Body of pancreas (tissue), 4 donors: ENCODE measurements at regions of chr15 and their contacts with region 1.

Region 1: DNA sequence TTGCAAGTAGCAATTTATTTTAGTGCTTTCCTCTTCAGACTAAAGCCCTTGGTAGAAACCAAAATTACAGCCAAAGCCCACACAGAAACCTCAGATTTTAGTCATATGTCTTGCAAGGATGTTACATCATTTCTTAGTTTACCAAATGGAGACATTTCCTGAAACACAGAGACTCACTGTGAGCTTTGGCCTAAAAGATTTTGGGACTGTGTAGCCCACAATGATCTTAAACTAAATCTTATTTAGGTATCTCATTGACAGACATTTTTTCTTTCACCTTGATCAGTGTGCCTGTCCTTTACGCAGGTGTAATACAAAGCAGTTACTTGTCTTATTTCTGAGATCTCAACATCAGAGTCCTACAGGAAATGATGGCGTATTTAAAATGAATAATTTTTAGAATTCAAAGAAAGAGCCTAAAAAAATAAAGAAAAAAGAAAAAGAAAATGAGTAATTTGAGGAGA is 27.8 kb upstream of the AP4E1 start:
- DNase-seq: no peak
- ATAC-seq: no peak
- H3K4me3 ChIP-seq: no peak overlapping the region
- H3K27ac ChIP-seq: peak overlapping the region in 1 of 4 donors; percentile 18
- H3K4me1 ChIP-seq: peaks cover 23% of the 10 kb centered on the region
- H3K27me3 ChIP-seq: no peaks in the 10 kb centered on the region
- CTCF ChIP-seq: no peak
- POLR2A ChIP-seq: no peak

Region 2: DNA sequence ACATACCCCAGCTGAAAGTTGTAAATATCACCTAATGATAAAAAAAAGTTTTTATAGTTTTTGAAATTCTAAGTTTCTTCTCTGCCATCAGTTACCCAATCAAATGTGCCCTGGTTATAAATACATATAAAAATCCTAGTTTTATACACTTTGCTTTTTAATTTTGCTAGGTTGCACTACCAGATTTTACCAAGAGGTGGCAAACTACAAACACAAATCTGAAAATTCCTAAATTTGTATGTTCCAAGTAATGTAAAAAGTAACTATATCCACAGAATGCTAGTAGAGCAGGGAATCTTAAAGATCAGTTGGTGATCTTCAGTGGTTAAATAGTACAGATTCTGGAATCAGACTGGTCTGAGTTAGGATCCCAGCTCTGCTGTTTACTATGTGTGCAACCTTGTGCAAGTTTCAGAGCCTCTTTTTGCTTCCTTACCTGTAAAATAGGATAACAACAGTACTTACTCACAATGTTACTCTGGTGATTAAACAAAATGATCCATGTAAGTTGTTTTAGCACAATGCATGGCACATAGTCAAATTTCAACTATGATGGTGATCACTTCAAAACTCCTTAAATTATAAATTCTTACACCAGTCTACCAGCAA is 205.0 kb before region 1 on chr15:
- intact Hi-C with region 1: loop called (anchors 5 kb)
- DNase-seq: no peak
- ATAC-seq: no peak
- H3K4me3 ChIP-seq: no peak overlapping the region
- H3K27ac ChIP-seq: no peak overlapping the region
- H3K4me1 ChIP-seq: peaks cover 12% of the 10 kb centered on the region
- H3K27me3 ChIP-seq: no peaks in the 10 kb centered on the region
- CTCF ChIP-seq: peak; percentile 56 to 93 (median 72)
- POLR2A ChIP-seq: no peak

Region 3: DNA sequence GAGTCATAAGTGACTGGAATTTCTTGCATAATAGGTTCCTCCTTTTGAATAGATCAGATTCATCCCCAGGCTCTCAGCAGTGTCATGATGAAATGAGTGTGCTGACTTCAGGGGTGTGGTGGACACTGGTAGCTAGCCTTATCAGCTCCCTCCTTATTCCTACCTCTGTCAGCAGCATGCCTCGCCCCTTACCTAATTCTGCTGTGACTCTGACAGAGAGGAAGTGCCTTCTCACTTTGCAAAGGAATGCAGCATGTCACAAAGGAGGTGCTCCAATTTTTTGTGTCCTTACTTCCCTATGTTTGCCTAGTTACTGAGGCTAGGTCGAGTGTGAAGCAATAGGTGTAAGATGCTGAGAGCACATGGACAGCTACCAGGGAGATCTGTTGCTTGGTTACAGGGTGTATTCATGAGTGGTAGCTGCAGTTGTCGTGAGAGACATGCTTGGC is 123.4 kb after region 1 on chr15:
- intact Hi-C with region 1: no loop called
- DNase-seq: no peak
- ATAC-seq: no peak
- H3K4me3 ChIP-seq: no peak overlapping the region
- H3K27ac ChIP-seq: no peak overlapping the region
- H3K4me1 ChIP-seq: no peaks in the 10 kb centered on the region
- H3K27me3 ChIP-seq: no peaks in the 10 kb centered on the region
- CTCF ChIP-seq: no peak
- POLR2A ChIP-seq: no peak